ENCODE measurements at regions of chr13 and their contacts with region 1.

Region 1: DNA sequence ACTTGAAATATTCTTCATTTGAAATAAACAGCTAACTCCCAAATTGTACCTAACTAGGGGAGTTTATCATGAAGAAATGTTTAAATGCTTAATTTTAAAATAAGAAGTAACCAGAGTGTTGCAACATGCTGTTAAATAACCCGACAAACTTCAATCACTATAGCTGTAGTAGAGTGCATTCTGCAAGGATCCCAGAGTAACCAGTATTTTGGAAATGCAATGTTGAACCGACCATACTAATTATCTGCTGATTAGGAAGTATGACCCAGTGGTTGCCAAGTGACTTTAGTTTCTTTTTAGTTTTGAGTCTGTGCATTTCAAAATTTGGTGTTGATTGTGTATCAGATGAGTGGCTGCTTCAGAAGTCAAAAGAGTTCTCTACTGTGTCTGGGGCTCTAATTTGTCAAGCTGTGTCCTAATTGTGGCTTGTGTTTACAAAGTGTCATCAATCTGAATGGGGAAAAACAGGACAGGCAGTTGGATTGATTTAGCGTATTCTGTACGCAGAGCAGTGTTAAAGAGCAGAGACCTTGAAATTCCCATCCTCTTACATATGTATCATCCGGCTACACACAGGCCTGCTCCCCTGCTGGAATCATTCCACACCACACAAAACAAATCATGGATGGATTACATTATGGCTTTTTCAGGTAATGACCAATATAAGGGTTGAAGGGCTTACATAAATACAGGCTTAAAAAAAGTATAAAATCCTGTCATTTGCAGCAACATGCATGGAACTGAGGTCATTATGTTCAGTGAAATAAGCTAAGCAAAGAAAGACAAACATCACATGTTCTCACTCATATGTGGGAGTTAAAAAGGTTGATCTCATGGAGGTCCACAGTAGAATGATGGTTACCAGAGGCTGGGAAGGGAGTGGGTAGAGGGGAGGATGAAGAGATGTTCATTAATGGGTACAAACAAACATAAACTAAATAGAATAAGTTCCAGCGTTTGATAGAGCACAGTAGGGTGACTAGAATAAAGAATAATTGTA is 351.5 kb downstream of the KLF12 start:
- DNase-seq: no peak
- ATAC-seq: no peak

Region 2: GRCh38 chr13:72864142-72865011 is 918.4 kb before region 1 on chr13:
- intact Hi-C with region 1: loop called (anchors 5 kb)
- DNase-seq: no peak
- ATAC-seq: no peak

Measured in sciatic nerve (tissue), 2 donors.